ENCODE measurements at regions of chr11 and their contacts with region 1.

Region 1: GRCh38 chr11:8011981-8012444 is 24.9 kb downstream of the EIF3F start:
- DNase-seq: no peak
- H3K4me3 ChIP-seq: no peak overlapping the region
- H3K4me1 ChIP-seq: no peaks in the 10 kb centered on the region
- H3K27me3 ChIP-seq: peaks cover 3% of the 10 kb centered on the region; the same call in 1 of the 2 replicates

Region 2: DNA sequence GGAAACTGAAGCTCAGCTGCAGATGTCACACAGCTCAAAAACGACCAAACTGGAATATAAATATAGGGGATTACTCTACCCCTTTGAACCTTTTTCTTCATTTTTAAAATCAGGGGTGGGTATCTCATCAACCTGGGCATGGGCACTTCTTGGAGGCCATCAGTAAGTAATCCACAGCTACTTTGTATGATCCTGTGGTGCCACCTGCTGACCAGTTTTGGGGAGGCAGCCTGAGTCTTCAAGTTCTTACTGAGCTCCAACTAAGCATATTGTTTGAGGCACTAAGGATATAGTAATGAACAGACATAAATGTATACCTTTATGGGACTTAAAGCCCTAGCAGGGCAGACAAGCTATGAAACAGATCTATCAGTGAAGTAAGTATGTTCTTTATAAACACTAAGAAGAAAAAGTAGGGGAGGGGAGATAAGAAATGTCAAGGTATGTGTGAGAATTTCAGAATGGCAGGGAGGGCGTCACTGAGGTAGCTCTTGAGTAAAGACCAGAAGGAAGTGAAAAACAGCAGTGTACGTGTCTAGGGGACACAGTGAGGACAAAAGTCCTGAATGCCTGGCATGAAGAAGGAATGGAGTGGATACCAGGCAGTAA is 87.4 kb after region 1 on chr11:
- in situ Hi-C with region 1: loop called (anchors 5 kb)
- DNase-seq: peak; percentile 42 to 83
- H3K4me3 ChIP-seq: no peak overlapping the region
- H3K4me1 ChIP-seq: no peaks in the 10 kb centered on the region
- H3K27me3 ChIP-seq: no peaks in the 10 kb centered on the region